GM12878 (cell line): ENCODE measurements at regions of chr4 and their contacts with region 1.

Region 1: DNA sequence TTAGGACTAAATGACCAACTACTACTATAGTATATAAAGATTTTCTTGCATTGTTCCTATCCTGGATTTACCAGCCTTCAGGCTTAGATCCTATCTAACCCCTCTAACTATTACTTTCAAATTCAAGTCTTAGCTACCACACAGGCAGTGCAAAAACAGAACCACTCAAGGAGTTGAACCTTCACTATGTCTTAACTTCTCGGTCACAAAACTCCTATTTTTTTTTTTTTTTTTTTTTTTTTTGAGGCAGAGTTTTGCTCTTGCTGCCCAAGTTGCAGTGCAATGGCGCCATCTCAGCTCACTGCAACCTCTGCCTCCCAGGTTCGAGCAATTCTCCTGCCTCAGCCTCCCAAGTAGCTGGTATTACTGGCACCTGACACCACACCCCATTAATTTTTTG is 6.3 kb upstream of the FAM200B start:
- DNase-seq: no peak
- ATAC-seq: peak; percentile 35
- H3K4me3 ChIP-seq: no peak overlapping the region
- H3K27ac ChIP-seq: no peak overlapping the region
- H3K4me1 ChIP-seq: peaks cover 4% of the 10 kb centered on the region; the same call in 1 of the 2 replicates
- H3K27me3 ChIP-seq: no peaks in the 10 kb centered on the region
- CTCF ChIP-seq: no peak
- EP300 ChIP-seq: no peak
- POLR2A ChIP-seq: no peak
- RAD21 ChIP-seq: no peak

Region 2: DNA sequence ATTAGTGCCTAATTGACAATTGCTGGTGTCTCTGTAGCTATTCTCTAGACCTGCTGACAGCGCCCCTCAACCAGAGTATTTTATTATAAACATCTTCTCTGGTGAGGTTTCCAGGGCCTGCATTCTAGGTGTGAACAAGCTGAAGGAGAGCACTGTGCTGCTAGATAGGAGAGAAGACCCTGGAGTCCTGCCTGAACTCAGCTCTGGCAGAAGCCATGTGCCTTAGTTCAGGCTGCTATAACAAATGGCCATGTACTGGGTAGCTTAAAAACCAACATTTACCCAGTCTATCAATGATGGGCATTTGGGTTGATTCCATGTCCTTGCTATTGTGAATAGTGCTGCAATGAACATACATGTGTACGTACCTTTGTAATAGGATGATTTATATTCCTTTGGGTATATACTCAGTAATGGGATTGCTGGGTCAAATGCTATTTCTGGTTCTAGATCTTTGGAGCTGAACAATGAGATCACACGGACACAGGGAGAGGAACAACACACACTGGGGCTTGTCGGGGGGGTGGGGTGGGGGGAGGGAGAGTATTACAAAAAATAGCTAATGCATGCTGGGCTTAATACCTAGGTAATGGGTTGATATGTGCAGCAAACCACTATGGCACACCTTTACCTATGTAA is 858.6 kb before region 1 on chr4:
- CTCF ChIA-PET with region 1: no interaction called
- POLR2A ChIA-PET with region 1: no interaction called
- RAD21 ChIA-PET with region 1: no interaction called
- SMC1A ChIA-PET with region 1: no interaction called
- in situ Hi-C with region 1: no loop called
- intact Hi-C with region 1: no loop called
- DNase-seq: no peak
- ATAC-seq: no peak
- H3K4me3 ChIP-seq: no peak overlapping the region
- H3K27ac ChIP-seq: no peak overlapping the region
- H3K4me1 ChIP-seq: no peaks in the 10 kb centered on the region
- H3K27me3 ChIP-seq: no peaks in the 10 kb centered on the region
- CTCF ChIP-seq: no peak
- EP300 ChIP-seq: no peak
- POLR2A ChIP-seq: no peak
- RAD21 ChIP-seq: no peak

Region 3: GRCh38 chr4:15479089-15479912 is 196.1 kb before region 1 on chr4:
- CTCF ChIA-PET with region 1: interaction called, 10 read pairs
- POLR2A ChIA-PET with region 1: no interaction called
- RAD21 ChIA-PET with region 1: no interaction called
- SMC1A ChIA-PET with region 1: interaction called, 6 read pairs
- in situ Hi-C with region 1: no loop called
- intact Hi-C with region 1: no loop called
- DNase-seq: no peak
- ATAC-seq: peak; percentile 84
- H3K4me3 ChIP-seq: no peak overlapping the region
- H3K27ac ChIP-seq: no peak overlapping the region
- H3K4me1 ChIP-seq: no peaks in the 10 kb centered on the region
- H3K27me3 ChIP-seq: no peaks in the 10 kb centered on the region
- CTCF ChIP-seq: peak; percentile 51 to 74 (median 57); a peak in 5 of 6 replicates
- EP300 ChIP-seq: no peak
- POLR2A ChIP-seq: no peak
- RAD21 ChIP-seq: peak; percentile 79

Region 4: DNA sequence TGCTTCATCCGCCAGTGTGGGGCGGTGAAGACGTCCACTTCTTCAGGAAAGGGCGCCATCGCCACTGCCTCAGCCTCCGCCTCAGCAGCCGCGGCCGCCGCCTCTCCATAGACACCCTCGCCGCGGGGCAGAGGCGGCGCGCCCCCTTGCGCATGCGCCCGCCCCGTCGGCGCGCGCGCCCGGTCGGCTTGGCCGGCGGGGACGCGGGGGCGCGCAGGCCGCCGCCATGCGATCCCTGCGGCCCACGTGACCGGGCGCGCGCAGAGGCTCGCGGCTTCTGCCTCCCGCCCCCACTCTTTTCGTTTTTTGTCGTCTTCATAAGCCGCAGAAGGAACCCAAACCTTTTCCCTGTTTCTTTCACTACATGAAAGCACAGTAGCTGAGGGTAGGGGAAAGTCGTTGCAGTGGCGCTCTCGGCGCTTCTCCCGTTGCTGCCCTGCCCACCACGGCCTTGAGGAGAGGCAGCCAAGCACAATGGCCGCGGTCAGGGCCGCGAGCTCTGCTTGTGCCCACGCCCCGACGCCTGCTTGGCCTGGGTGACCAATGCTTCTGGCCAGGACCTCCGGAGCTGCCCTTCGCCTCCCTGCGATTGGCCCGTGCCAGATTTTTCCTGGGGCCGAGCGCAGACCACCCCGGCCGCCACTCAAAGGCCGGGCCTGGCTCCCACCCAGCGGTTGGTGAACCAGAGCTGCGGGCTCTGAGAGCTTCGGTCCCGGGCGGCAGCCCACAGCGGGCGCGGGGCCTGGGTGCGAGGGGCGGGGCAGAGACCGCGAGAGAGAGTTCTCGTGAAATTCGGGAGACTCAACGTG is 19.9 kb before region 1 on chr4 and contains the start of gene FBXL5:
- CTCF ChIA-PET with region 1: interaction called, 23 read pairs
- POLR2A ChIA-PET with region 1: interaction called, 15 read pairs
- RAD21 ChIA-PET with region 1: interaction called, 15 read pairs
- SMC1A ChIA-PET with region 1: interaction called, 34 read pairs
- in situ Hi-C with region 1: no loop called
- intact Hi-C with region 1: no loop called
- DNase-seq: peak; percentile 36
- ATAC-seq: peak; percentile 64
- H3K4me3 ChIP-seq: peak within 1 kb of the TSS; percentile 84
- H3K27ac ChIP-seq: peak within 1 kb of the TSS; percentile 95
- H3K4me1 ChIP-seq: peaks cover 15% of the 10 kb centered on the region
- H3K27me3 ChIP-seq: no peaks in the 10 kb centered on the region
- CTCF ChIP-seq: no peak
- EP300 ChIP-seq: no peak
- POLR2A ChIP-seq: peak; percentile 88
- RAD21 ChIP-seq: no peak
- polyA plus RNA-seq, gene FBXL5: 10.1 to 12.3 TPM